Body of pancreas (tissue), 4 donors: ENCODE measurements at regions of chr15 and their contacts with region 1.

Region 1: DNA sequence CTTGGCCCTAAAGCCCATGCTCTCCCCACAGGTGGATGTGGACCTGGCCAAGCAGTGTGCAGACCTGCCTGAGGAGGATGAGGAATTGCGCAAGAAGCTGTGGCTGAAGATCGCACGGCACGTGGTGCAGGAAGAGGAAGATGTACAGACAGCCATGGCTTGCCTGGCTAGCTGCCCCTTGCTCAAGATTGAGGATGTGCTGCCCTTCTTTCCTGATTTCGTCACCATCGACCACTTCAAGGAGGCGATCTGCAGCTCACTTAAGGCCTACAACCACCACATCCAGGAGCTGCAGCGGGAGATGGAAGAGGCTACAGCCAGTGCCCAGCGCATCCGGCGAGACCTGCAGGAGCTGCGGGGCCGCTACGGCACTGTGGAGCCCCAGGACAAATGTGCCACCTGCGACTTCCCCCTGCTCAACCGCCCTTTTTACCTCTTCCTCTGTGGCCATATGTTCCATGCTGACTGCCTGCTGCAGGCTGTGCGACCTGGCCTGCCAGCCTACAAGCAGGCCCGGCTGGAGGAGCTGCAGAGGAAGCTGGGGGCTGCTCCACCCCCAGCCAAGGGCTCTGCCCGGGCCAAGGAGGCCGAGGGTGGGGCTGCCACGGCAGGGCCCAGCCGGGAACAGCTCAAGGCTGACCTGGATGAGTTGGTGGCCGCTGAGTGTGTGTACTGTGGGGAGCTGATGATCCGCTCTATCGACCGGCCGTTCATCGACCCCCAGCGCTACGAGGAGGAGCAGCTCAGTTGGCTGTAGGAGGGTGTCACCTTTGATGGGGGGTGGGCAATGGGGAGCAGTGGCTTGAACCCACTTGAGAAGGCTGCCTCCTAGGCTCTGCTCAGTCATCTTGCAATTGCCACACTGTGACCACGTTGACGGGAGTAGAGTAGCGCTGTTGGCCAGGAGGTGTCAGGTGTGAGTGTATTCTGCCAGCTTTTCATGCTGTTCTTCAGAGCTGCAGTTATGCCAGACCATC is 8.6 kb downstream of the VPS18 start:
- DNase-seq: peak in 1 of 4 donors; percentile 74
- ATAC-seq: no peak
- H3K4me3 ChIP-seq: no peak overlapping the region
- H3K27ac ChIP-seq: peak overlapping the region in 1 of 4 donors; percentile 6
- H3K4me1 ChIP-seq: peaks cover 33% of the 10 kb centered on the region
- H3K27me3 ChIP-seq: no peaks in the 10 kb centered on the region
- CTCF ChIP-seq: no peak
- POLR2A ChIP-seq: no peak

Region 2: GRCh38 chr15:40647523-40647922 is 255.3 kb before region 1 on chr15:
- intact Hi-C with region 1: no loop called
- DNase-seq: no peak
- ATAC-seq: no peak
- H3K4me3 ChIP-seq: no peak overlapping the region
- H3K27ac ChIP-seq: no peak overlapping the region
- H3K4me1 ChIP-seq: no peaks in the 10 kb centered on the region
- H3K27me3 ChIP-seq: no peaks in the 10 kb centered on the region
- CTCF ChIP-seq: no peak
- POLR2A ChIP-seq: no peak

Region 3: GRCh38 chr15:41022487-41023090 is 119.7 kb after region 1 on chr15:
- intact Hi-C with region 1: loop called (anchors 5 kb)
- DNase-seq: peak; percentile 23 to 25 (median 24)
- ATAC-seq: peak; percentile 47
- H3K4me3 ChIP-seq: no peak overlapping the region
- H3K27ac ChIP-seq: no peak overlapping the region
- H3K4me1 ChIP-seq: peaks cover 4% of the 10 kb centered on the region
- H3K27me3 ChIP-seq: no peaks in the 10 kb centered on the region
- CTCF ChIP-seq: peak in 6 of 7 experiments; percentile 35 to 66 (median 58)
- POLR2A ChIP-seq: no peak

Region 4: DNA sequence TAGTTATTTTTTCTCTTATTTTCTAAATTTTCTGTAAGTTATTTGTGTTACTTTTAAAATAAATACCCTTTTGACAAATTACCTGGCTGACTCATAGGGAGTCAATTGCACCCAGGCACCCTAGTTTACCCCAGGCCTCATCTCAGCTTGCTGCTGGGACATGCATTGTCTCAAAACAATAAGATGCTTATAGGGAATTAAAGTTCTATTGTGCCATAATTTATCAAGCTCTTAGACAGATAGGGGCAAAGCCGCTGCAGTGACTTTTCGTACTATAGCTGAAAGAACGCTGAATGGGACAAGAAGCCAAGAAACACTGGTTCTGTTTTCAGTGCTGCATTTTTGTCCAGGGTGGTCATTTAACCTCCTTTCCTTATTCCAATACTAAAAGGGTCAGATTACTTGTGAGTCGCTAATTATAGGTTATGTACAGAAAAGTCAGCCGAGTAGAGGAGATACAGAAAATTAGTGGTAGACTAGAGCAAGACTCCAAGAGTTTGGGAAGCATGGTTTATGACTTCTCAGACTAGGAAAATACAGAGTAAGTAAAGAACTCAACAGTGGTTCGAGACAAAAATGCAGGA is 277.4 kb after region 1 on chr15:
- intact Hi-C with region 1: loop called (anchors 5 kb)
- DNase-seq: no peak
- ATAC-seq: no peak
- H3K4me3 ChIP-seq: no peak overlapping the region
- H3K27ac ChIP-seq: no peak overlapping the region
- H3K4me1 ChIP-seq: no peaks in the 10 kb centered on the region
- H3K27me3 ChIP-seq: no peaks in the 10 kb centered on the region
- CTCF ChIP-seq: no peak
- POLR2A ChIP-seq: no peak